ENCODE measurements at regions of chr11 and their contacts with region 1.

Region 1: DNA sequence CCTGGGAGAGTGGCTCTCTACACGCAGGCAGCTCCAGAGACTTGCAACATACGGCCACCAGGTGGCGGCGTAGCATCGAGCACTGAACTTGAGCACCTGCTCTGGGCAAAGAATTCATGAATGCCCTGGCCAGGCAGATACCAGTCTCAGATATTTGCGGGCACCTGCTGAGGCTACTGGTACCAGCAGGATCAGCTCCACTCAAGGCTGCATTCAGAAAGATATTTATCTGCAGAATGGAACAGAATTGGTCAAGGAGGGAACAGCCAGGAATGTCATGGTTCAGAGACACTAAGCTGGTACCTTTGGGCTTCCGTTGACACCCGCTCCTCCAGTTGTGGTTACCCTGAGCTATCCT is 10.8 kb upstream of the CCDC86 start:
- DNase-seq: peak; percentile 69
- H3K4me3 Mint-ChIP-seq: no peak overlapping the region
- H3K27ac Mint-ChIP-seq: no peak overlapping the region
- H3K4me1 Mint-ChIP-seq: peaks cover 42% of the 10 kb centered on the region
- H3K27me3 Mint-ChIP-seq: peaks cover 16% of the 10 kb centered on the region

Region 2: DNA sequence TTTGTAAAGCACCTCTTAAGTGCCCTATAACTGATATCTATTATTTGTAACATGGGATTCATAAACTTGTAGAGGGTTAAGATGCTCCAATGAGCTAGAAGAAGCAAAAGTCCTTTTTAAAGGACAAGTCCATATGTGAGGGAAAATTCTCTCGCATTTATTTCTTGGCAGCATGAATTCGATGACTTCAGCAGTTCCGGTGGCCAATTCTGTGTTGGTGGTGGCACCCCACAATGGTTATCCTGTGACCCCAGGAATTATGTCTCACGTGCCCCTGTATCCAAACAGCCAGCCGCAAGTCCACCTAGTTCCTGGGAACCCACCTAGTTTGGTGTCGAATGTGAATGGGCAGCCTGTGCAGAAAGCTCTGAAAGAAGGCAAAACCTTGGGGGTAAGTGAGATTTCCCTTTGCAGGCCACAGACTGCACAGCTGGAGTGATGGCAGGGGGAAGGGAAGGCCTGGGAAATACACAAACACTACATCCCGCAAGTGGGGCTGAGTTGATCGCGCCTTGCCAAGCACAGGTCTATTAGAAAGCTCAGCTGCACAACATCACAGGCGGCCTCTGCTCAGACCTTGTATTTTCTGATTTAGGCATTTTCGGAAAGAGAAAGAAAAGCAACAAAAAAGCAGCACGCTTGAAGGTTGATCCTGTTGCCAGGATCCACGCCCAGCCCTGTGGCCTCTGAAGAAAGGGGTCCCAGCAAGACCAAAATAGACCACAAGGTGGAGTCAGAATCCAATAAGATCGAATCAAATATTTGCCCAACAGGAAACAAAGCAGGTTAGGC is 130.2 kb before region 1 on chr11:
- intact Hi-C with region 1: no loop called
- DNase-seq: no peak
- H3K4me3 Mint-ChIP-seq: no peak overlapping the region
- H3K27ac Mint-ChIP-seq: no peak overlapping the region
- H3K4me1 Mint-ChIP-seq: no peaks in the 10 kb centered on the region
- H3K27me3 Mint-ChIP-seq: peaks cover 5% of the 10 kb centered on the region

Region 3: DNA sequence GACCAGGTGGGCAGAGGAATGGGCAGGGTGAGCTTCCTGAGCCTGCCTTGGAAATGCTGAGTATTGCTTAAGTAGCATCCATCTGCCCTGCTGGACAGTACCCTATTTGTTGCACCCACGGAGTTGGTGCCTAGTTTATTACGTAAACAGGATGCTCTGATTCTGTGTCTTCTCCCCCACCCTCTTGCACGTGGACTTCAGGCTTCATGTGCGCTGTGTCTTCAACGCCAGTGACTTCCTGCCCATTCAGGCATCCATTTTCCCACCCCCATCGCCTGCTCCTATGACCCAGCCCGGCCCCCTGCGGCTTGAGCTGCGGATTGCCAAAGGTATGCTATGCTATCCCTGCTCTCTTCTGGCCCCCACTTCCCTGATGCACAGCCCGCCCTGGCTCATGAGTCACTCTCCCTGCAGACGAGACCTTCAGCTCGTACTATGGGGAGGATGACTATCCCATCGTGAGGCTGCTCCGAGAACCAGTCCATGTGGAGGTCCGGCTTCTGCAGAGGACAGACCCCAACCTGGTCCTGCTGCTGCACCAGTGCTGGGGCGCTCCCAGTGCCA is 41.9 kb after region 1 on chr11:
- intact Hi-C with region 1: loop called (anchors 5 kb)
- DNase-seq: no peak
- H3K4me3 Mint-ChIP-seq: no peak overlapping the region
- H3K27ac Mint-ChIP-seq: no peak overlapping the region
- H3K4me1 Mint-ChIP-seq: peaks cover 62% of the 10 kb centered on the region
- H3K27me3 Mint-ChIP-seq: no peaks in the 10 kb centered on the region

Region 4: DNA sequence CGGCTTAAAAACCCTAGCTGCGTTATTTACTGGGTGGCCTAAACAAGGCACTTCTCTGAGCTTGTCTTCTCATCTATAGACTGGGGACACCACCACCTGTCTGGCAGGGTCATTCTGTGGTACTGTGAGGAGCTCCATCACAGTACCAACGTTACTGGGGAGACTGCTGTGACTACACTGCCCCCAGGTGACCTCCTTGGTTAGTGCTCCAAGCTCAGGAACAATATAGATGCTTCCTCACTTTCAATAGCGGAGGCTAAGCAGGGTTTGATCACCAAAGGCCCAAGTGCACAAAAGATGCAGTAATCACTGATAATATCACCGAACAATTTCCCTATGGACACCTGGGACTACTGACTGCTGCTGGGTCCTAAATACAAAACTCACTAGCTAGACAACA is 56.4 kb after region 1 on chr11:
- intact Hi-C with region 1: loop called (anchors 1 kb)
- DNase-seq: peak; percentile 55
- H3K4me3 Mint-ChIP-seq: no peak overlapping the region
- H3K27ac Mint-ChIP-seq: no peak overlapping the region
- H3K4me1 Mint-ChIP-seq: peaks cover 25% of the 10 kb centered on the region
- H3K27me3 Mint-ChIP-seq: no peaks in the 10 kb centered on the region

Region 5: DNA sequence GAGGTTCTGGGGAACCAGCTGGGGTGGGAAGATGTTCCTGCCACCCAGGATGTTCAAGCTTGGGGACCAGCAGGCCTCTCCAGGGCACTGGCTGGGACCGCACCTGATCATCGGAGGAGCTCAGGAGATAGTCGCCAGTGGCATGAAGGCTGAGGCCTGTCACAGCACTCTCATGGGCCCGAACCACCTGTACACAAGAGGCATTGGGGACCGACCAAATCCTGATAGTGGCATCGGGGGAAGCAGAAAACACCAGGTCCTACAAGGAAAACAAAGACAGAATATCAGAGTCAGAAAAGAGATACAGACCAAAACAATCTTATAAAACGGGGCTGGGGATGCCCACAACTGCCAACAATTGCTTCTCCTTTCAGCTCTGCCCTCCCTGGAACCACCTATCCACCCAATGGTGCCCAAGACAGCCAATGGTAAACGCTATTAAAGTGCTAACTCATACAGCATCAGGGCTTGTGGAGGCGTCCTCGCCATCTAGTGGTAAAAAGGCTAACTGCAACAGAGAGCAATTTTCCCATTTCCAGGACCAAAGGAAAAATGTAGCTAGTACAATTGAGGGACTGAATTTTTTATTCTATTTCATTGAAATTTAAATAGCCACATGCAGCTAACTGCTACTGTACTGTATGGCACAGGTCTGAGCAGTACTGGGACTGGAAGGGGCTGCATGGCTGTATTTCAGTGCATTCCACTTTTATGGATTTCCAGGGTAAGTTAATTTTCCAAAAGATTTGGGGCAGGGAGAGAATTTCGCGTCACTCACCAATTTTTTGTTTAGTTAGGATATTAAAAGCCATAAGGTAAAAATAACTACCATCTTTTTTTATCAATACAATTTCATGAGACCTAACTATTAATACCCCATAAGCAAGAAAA is 68.2 kb after region 1 on chr11:
- intact Hi-C with region 1: loop called (anchors 1 kb)
- DNase-seq: no peak
- H3K4me3 Mint-ChIP-seq: no peak overlapping the region
- H3K27ac Mint-ChIP-seq: no peak overlapping the region
- H3K4me1 Mint-ChIP-seq: peaks cover 9% of the 10 kb centered on the region
- H3K27me3 Mint-ChIP-seq: no peaks in the 10 kb centered on the region

Region 6: GRCh38 chr11:61187505-61188130 is 356.5 kb after region 1 on chr11:
- intact Hi-C with region 1: loop called (anchors 2 kb)
- DNase-seq: peak; percentile 62
- H3K4me3 Mint-ChIP-seq: no peak overlapping the region
- H3K27ac Mint-ChIP-seq: no peak overlapping the region
- H3K4me1 Mint-ChIP-seq: peaks cover 5% of the 10 kb centered on the region
- H3K27me3 Mint-ChIP-seq: peaks cover 16% of the 10 kb centered on the region

Measured in activated T-helper 2 cell treated with anti-CD3 and anti-CD28 coated beads, Interferon-gamma antibody, Interleukin-2, Interleukin-4, amounts not matched to agents 10 μg/mL and 5 μg/mL and 100 μg/mL, durations not matched to agents 14 hours and 24 hours and 36 hours (primary cell).